CD4-positive, alpha-beta T cell (primary cell): ENCODE measurements at regions of chr3 and their contacts with region 1.

Region 1: DNA sequence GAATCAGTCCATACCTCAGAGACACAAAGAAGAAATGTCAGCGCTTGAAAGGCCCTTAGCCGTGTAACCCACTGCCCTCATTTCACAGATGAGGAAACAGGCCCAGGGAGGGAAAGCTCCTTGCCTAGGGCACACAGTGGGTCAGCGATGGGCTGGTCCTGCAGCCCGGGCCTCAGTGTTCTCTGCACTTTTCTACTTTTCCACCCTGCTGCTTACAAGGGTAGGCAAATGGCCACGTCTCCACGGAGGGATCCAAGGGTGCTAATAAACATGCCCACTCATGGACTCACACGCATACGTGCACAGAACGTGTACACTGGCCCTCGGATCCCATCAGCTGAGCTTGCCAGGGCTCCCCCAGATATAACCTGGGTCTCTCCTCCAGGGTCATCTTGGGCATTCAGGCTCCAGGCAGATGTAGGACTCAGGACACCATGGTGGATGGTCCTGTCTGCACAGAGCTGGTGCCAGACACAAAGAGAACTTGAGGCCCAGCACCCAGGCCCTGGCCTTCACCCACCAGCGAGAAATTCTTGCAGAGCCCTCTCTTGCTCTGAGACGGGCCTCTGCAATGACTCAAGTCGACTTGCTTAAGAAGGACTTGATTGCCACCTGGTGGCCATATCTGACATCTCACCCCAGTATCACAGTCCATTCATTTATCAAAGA is 34.5 kb upstream of the VPS8 start:
- DNase-seq: peak; percentile 66 to 91 (median 76)
- ATAC-seq: peak; percentile 99
- H3K4me3 ChIP-seq: no peak overlapping the region
- H3K4me3 Mint-ChIP-seq: no peak overlapping the region
- H3K27ac ChIP-seq: no peak overlapping the region
- H3K27ac Mint-ChIP-seq: no peak overlapping the region
- H3K4me1 ChIP-seq: peaks cover 2% of the 10 kb centered on the region
- H3K4me1 Mint-ChIP-seq: no peaks in the 10 kb centered on the region
- H3K27me3 ChIP-seq: no peaks in the 10 kb centered on the region
- H3K27me3 Mint-ChIP-seq: peaks cover 26% of the 10 kb centered on the region
- CTCF ChIP-seq: peak; percentile 88

Region 2: GRCh38 chr3:183502237-183503181 is 1275.0 kb before region 1 on chr3:
- CTCF ChIA-PET with region 1: no interaction called
- POLR2A ChIA-PET with region 1: no interaction called
- intact Hi-C with region 1: no loop called
- DNase-seq: no peak
- ATAC-seq: no peak
- H3K4me3 ChIP-seq: no peak overlapping the region
- H3K4me3 Mint-ChIP-seq: no peak overlapping the region
- H3K27ac ChIP-seq: no peak overlapping the region
- H3K27ac Mint-ChIP-seq: peak overlapping the region; percentile 65
- H3K4me1 ChIP-seq: no peaks in the 10 kb centered on the region
- H3K4me1 Mint-ChIP-seq: peaks cover 36% of the 10 kb centered on the region
- H3K27me3 ChIP-seq: no peaks in the 10 kb centered on the region
- H3K27me3 Mint-ChIP-seq: no peaks in the 10 kb centered on the region
- CTCF ChIP-seq: no peak

Region 3: GRCh38 chr3:184371570-184372018 is 405.9 kb before region 1 on chr3:
- CTCF ChIA-PET with region 1: no interaction called
- POLR2A ChIA-PET with region 1: no interaction called
- intact Hi-C with region 1: loop called in 1 of 2 experiments (anchors 2 kb)
- DNase-seq: peak; percentile 42 to 83 (median 57)
- ATAC-seq: peak; percentile 100
- H3K4me3 ChIP-seq: no peak overlapping the region
- H3K4me3 Mint-ChIP-seq: no peak overlapping the region
- H3K27ac ChIP-seq: no peak overlapping the region
- H3K27ac Mint-ChIP-seq: no peak overlapping the region
- H3K4me1 ChIP-seq: peaks cover 5% of the 10 kb centered on the region
- H3K4me1 Mint-ChIP-seq: peaks cover 6% of the 10 kb centered on the region
- H3K27me3 ChIP-seq: peaks cover 0 to 10% of the 10 kb centered on the region in 2 experiments
- H3K27me3 Mint-ChIP-seq: peaks cover 7% of the 10 kb centered on the region
- CTCF ChIP-seq: peak; percentile 76

Region 4: DNA sequence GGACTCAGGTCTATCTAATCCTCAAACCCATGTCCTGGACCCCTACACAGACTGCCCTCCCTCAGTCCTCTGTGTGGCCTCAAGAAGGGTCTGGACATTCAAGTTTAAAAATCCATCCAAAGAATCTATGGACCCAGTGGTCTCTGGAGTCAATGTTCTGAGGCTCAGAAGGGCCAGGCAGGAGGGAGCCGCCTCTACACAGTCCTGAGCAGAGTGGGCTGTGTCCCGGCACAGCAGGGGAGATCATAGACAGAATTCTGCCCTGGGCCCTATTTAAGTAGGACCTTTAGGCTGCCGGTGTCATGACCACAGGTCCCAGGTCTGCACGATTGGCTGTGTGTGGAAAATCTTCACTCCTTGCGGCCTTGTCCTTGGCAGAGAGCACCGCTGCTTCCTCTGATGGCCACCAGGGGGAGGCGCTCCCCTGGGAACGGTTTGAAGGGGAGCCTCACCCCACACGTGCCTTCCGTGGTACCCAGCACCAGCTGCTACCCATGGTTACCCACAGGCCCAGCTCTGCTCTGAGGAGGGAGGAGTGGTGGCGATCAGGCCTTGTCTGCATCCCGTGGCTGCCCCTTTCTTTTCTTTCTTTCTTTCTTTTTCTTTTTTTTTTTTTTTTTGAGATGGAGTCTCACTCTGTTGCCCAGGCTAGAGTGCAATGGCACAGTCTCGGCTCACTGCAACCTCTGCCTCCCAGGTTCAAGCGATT is 359.7 kb before region 1 on chr3:
- CTCF ChIA-PET with region 1: no interaction called
- POLR2A ChIA-PET with region 1: interaction called, 3 read pairs
- intact Hi-C with region 1: loop called in 1 of 2 experiments (anchors 1 kb)
- DNase-seq: peak; percentile 58 to 85 (median 64)
- ATAC-seq: peak; percentile 99
- H3K4me3 ChIP-seq: no peak overlapping the region
- H3K4me3 Mint-ChIP-seq: no peak overlapping the region
- H3K27ac ChIP-seq: no peak overlapping the region
- H3K27ac Mint-ChIP-seq: no peak overlapping the region
- H3K4me1 ChIP-seq: peaks cover 4% of the 10 kb centered on the region
- H3K4me1 Mint-ChIP-seq: no peaks in the 10 kb centered on the region
- H3K27me3 ChIP-seq: no peaks in the 10 kb centered on the region
- H3K27me3 Mint-ChIP-seq: no peaks in the 10 kb centered on the region
- CTCF ChIP-seq: peak; percentile 87

Region 5: GRCh38 chr3:184561061-184561912 is 216.2 kb before region 1 on chr3 and contains the start of gene EPHB3:
- CTCF ChIA-PET with region 1: interaction called, 8 read pairs
- POLR2A ChIA-PET with region 1: interaction called, 19 read pairs
- intact Hi-C with region 1: loop called (anchors 1 kb)
- DNase-seq: peak; percentile 84 to 94 (median 86)
- ATAC-seq: peak; percentile 81
- H3K4me3 ChIP-seq: peak within 1 kb of the TSS; percentile 53
- H3K4me3 Mint-ChIP-seq: peak within 1 kb of the TSS; percentile 72
- H3K27ac ChIP-seq: no peak within 1 kb of the TSS
- H3K27ac Mint-ChIP-seq: peak within 1 kb of the TSS; percentile 50
- H3K4me1 ChIP-seq: peaks cover 61% of the 10 kb centered on the region
- H3K4me1 Mint-ChIP-seq: peaks cover 49% of the 10 kb centered on the region
- H3K27me3 ChIP-seq: peaks cover 18 to 42% of the 10 kb centered on the region in 2 experiments
- H3K27me3 Mint-ChIP-seq: peaks cover 41% of the 10 kb centered on the region
- CTCF ChIP-seq: peak; percentile 99
- total RNA-seq, gene EPHB3: 0.19 to 0.22 TPM

Region 6: GRCh38 chr3:184727357-184728009 is 50.0 kb before region 1 on chr3:
- CTCF ChIA-PET with region 1: no interaction called
- POLR2A ChIA-PET with region 1: no interaction called
- intact Hi-C with region 1: loop called in 1 of 2 experiments (anchors 2 kb)
- DNase-seq: peak in 13 of 14 experiments; percentile 6 to 76 (median 24)
- ATAC-seq: peak; percentile 75
- H3K4me3 ChIP-seq: no peak overlapping the region
- H3K4me3 Mint-ChIP-seq: no peak overlapping the region
- H3K27ac ChIP-seq: no peak overlapping the region
- H3K27ac Mint-ChIP-seq: no peak overlapping the region
- H3K4me1 ChIP-seq: no peaks in the 10 kb centered on the region
- H3K4me1 Mint-ChIP-seq: no peaks in the 10 kb centered on the region
- H3K27me3 ChIP-seq: peaks cover 0 to 2% of the 10 kb centered on the region in 2 experiments
- H3K27me3 Mint-ChIP-seq: peaks cover 3% of the 10 kb centered on the region
- CTCF ChIP-seq: peak; percentile 78

Region 7: DNA sequence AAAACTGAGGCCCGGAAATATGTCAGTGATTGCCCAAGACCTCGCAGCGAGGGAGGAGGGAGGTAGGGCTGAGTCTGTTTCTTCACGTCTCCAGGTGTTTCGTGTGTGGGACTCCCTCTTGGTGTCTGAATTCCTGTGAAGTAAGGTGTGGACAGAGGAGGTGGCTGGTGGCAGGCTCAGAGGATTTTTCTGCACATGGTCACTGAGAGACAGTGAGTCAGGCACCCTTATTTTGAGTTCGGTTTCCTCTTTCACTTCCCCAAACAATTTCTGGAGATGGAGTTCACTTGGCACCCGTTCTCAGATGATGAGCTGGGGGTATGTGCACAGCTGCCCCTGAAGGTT is 11.8 kb before region 1 on chr3:
- CTCF ChIA-PET with region 1: no interaction called
- POLR2A ChIA-PET with region 1: no interaction called
- intact Hi-C with region 1: no loop called
- DNase-seq: peak in 2 of 14 experiments; percentile 51 to 52
- ATAC-seq: no peak
- H3K4me3 ChIP-seq: no peak overlapping the region
- H3K4me3 Mint-ChIP-seq: no peak overlapping the region
- H3K27ac ChIP-seq: no peak overlapping the region
- H3K27ac Mint-ChIP-seq: no peak overlapping the region
- H3K4me1 ChIP-seq: no peaks in the 10 kb centered on the region
- H3K4me1 Mint-ChIP-seq: no peaks in the 10 kb centered on the region
- H3K27me3 ChIP-seq: no peaks in the 10 kb centered on the region
- H3K27me3 Mint-ChIP-seq: peaks cover 16% of the 10 kb centered on the region
- CTCF ChIP-seq: no peak